CD8-positive, alpha-beta T cell (primary cell): ENCODE measurements at regions of chr13 and their contacts with region 1.

Region 1: DNA sequence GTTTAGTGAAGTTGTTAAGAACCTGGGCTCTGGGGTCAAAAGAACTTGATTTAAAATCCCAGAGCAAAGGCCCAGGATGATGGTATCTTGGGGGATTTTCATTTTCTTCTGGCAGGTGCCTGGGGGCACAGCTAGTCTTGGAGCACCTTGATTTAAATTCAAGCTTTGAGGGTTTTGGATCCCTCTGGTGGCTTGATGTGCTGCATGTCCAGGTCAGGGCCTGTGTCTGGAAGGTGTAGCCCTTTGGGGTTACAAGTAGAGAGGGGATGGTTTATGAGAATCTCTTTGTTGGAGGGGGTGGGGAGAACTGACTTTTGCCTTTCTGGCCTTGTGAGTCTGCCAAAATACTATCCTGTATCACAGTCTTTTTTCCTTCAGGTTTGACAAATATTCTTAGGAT is 55.8 kb downstream of the AKAP11 start:
- DNase-seq: no peak
- ATAC-seq: no peak
- H3K4me3 ChIP-seq: no peak overlapping the region
- H3K4me3 Mint-ChIP-seq: no peak overlapping the region
- H3K27ac ChIP-seq: no peak overlapping the region
- H3K27ac Mint-ChIP-seq: peak overlapping the region; percentile 55
- H3K4me1 ChIP-seq: peaks cover 12% of the 10 kb centered on the region
- H3K4me1 Mint-ChIP-seq: peaks cover 26% of the 10 kb centered on the region
- H3K27me3 ChIP-seq: no peaks in the 10 kb centered on the region
- H3K27me3 Mint-ChIP-seq: no peaks in the 10 kb centered on the region
- CTCF ChIP-seq: no peak

Region 2: DNA sequence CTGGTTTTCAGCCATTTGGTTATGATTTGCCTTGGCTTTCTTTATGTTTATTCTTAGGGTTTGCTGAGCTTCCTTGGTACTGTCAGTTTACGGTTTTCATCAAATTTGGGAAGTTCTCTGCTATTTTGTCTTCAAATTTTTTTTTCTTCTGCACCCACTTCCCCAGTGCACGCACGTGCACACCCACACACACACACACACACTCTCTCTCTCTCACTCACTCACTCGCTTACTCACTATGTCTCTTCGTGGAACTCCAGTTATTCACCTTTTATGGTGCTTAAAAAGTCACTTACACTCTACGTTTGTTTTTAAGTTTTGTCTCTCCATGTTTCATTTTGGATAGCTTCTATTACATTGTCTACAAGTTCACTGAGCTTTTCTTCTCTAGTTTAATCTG is 48.6 kb before region 1 on chr13:
- CTCF ChIA-PET with region 1: no interaction called
- POLR2A ChIA-PET with region 1: no interaction called
- intact Hi-C with region 1: loop called in 1 of 2 experiments (anchors 1 kb)
- DNase-seq: peak in 2 of 9 experiments; percentile 24 to 44
- ATAC-seq: peak; percentile 46
- H3K4me3 ChIP-seq: no peak overlapping the region
- H3K4me3 Mint-ChIP-seq: no peak overlapping the region
- H3K27ac ChIP-seq: no peak overlapping the region
- H3K27ac Mint-ChIP-seq: no peak overlapping the region
- H3K4me1 ChIP-seq: peaks cover 41% of the 10 kb centered on the region
- H3K4me1 Mint-ChIP-seq: peaks cover 45% of the 10 kb centered on the region
- H3K27me3 ChIP-seq: no peaks in the 10 kb centered on the region
- H3K27me3 Mint-ChIP-seq: no peaks in the 10 kb centered on the region
- CTCF ChIP-seq: no peak

Region 3: GRCh38 chr13:42312817-42313431 is 14.8 kb before region 1 on chr13:
- CTCF ChIA-PET with region 1: interaction called, 3 read pairs
- POLR2A ChIA-PET with region 1: interaction called, 3 read pairs
- intact Hi-C with region 1: loop called in 1 of 2 experiments (anchors 1 kb)
- DNase-seq: no peak
- ATAC-seq: no peak
- H3K4me3 ChIP-seq: no peak overlapping the region
- H3K4me3 Mint-ChIP-seq: no peak overlapping the region
- H3K27ac ChIP-seq: no peak overlapping the region
- H3K27ac Mint-ChIP-seq: no peak overlapping the region
- H3K4me1 ChIP-seq: no peaks in the 10 kb centered on the region
- H3K4me1 Mint-ChIP-seq: peaks cover 15% of the 10 kb centered on the region
- H3K27me3 ChIP-seq: no peaks in the 10 kb centered on the region
- H3K27me3 Mint-ChIP-seq: no peaks in the 10 kb centered on the region
- CTCF ChIP-seq: no peak